ENCODE measurements at regions of chr2 and their contacts with region 1.

Region 1: DNA sequence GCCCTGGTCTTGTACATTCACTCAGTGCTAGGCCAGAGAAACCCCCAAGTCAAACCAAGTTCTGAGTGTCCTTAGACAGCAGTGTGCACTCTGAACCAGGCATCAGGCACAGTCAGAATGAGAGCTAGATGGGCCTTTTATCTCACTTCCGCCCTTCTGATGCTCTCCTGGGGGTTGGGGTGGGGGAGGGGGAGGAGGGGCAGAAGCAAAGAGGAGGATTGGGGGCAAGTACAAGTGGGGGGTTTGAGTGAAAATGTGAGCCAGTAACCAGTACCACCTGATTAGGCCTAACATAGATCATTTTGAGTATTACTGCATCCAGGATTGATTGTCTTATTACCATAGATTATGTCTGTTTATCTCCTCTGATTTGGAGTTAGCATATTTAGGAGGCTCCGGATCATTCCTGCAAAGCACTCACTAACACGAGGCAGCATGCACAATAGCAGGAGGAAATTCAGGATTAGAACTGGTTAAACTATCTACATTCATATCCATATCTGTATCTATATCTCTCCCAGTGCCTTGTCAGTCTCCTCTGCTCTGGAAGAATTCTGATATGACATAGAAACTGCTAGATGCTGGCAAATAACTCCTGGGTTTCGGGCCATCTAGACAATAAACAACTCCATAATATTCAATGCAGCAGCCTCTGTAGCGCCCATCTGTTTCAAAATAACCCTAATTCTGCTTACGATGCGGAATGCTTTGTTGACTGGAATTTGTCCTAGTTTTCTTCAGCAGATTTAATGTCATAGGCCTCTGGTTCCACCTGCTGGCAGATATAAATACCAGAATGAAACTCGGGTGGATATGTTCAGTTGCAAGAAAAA is 149.1 kb downstream of the RHBDD1 start:
- DNase-seq: no peak

Region 2: GRCh38 chr2:225670111-225670974 is 1314.6 kb before region 1 on chr2:
- intact Hi-C with region 1: loop called in 1 of 2 experiments (anchors 5 kb)
- DNase-seq: no peak

Region 3: DNA sequence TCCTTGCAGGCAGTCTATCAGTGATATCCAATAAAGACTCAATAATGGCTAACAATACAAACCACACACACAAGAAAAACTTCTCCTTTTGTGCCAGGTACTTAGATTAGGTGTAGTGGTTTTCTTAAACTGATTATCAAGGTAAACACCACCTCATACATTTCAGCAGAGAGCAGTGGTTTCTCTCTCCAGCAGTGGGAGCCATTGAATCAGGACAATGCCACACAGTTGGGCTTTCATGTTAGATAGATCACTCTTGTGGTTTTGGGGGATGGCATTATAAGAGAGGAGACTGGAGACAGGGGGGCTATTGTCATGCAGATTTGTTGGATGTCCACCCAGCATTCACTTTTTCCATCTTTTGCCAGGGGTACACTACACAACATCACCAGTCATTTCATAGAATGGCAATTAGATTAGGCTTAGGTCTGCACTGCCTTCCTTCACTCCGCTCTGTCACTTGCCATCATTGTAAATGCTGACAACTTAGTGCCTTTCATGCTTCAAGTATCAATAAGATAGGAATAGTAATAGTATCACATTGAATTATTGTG is 171.7 kb before region 1 on chr2:
- intact Hi-C with region 1: loop called (anchors 10 kb)
- DNase-seq: no peak

Region 4: DNA sequence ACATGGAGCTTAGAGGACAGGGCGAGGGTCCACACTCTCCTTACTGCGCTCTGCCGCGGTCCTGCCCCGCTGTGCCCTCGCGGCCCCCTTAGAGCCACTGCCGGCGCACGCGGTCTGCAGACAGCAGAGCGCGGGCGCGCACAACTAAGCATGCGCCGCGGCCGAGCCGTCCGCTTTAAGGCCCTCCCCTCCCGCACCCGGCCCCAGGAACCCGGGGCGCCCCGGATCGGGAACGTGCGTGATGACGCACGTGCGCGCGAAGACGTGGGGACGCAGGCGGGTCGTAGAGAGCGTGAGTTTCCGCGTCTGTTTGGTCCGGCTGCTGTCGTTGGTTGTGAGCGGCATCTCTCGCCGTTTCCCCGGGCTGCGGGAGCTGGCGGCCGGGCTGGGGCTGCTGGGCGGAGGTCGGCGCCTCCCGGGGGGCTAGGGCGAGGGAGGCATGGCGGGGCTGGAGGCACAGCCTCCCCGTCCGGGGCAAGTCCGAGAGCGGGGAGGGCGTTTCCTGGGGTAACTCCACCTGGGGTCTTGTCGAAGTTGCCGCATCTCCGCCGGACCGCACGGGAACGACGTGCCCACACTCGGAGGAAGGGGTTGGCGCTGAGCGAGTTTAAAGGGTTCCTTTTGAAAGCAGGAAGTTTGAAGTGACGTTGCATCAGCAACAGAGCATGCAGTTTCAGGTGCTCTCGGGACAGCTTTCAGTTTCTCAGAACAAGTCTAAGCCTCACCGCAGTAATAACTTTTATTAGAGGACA is 149.0 kb before region 1 on chr2 and contains the start of gene RHBDD1:
- intact Hi-C with region 1: loop called in 1 of 2 experiments (anchors 10 kb)
- DNase-seq: peak; percentile 98
- total RNA-seq, gene RHBDD1: 39.3 to 40.5 TPM

Region 5: GRCh38 chr2:227766373-227766883 is 781.5 kb after region 1 on chr2:
- intact Hi-C with region 1: no loop called
- DNase-seq: peak; percentile 92